Activated naive CD4-positive, alpha-beta T cell treated with anti-CD3 and anti-CD28 coated beads for 36 hours (primary cell): ENCODE measurements at regions of chr14 and their contacts with region 1.

Region 1: GRCh38 chr14:76761136-76761959 is at the start of gene VASH1:
- DNase-seq: peak; percentile 56
- H3K4me3 Mint-ChIP-seq: peak within 1 kb of the TSS; percentile 70
- H3K27ac Mint-ChIP-seq: no peak within 1 kb of the TSS
- H3K4me1 Mint-ChIP-seq: peaks cover 5% of the 10 kb centered on the region
- H3K27me3 Mint-ChIP-seq: peaks cover 47% of the 10 kb centered on the region
- total RNA-seq, gene VASH1: 0.86 to 1.2 TPM

Region 2: GRCh38 chr14:76151398-76152339 is 609.7 kb before region 1 on chr14 and contains the start of gene GPATCH2L:
- CTCF ChIA-PET with region 1: no interaction called
- intact Hi-C with region 1: loop called (anchors 5 kb)
- DNase-seq: peak; percentile 99
- H3K4me3 Mint-ChIP-seq: peak within 1 kb of the TSS; percentile 98
- H3K27ac Mint-ChIP-seq: peak within 1 kb of the TSS; percentile 97
- H3K4me1 Mint-ChIP-seq: peaks cover 48% of the 10 kb centered on the region
- H3K27me3 Mint-ChIP-seq: no peaks in the 10 kb centered on the region
- total RNA-seq, gene GPATCH2L: 40.0 to 43.4 TPM